K562 (cell line): ENCODE measurements at regions of chr1 and their contacts with region 1.

Region 1: GRCh38 chr1:60978421-60979357 is 103.7 kb upstream of the NFIA start:
- DNase-seq: peak; percentile 63 to 80 (median 74)
- ATAC-seq: peak; percentile 98
- H3K4me3 ChIP-seq: no peak overlapping the region
- H3K27ac ChIP-seq: no peak overlapping the region
- H3K4me1 ChIP-seq: peaks cover 5 to 16% of the 10 kb centered on the region in 2 experiments; a peak in 3 of 5 replicates
- H3K27me3 ChIP-seq: no peaks in the 10 kb centered on the region
- CTCF ChIP-seq: peak; percentile 86 to 95 (median 90)
- EP300 ChIP-seq: 0 out of 2 replicates have a peak, but pooled peaks have one; percentile 11
- POLR2A ChIP-seq: no peak
- RAD21 ChIP-seq: peak; percentile 95 to 98

Region 2: GRCh38 chr1:60916906-60917305 is 61.8 kb before region 1 on chr1:
- CTCF ChIA-PET with region 1: no interaction called
- POLR2A ChIA-PET with region 1: no interaction called
- in situ Hi-C with region 1: no loop called
- intact Hi-C with region 1: no loop called
- DNase-seq: no peak
- ATAC-seq: no peak; the same call in 2 of the 3 replicates
- H3K4me3 ChIP-seq: no peak overlapping the region
- H3K27ac ChIP-seq: no peak overlapping the region
- H3K4me1 ChIP-seq: no peaks in the 10 kb centered on the region; a peak in 1 of 5 replicates
- H3K27me3 ChIP-seq: no peaks in the 10 kb centered on the region
- CTCF ChIP-seq: no peak
- EP300 ChIP-seq: no peak
- POLR2A ChIP-seq: no peak
- RAD21 ChIP-seq: no peak

Region 3: DNA sequence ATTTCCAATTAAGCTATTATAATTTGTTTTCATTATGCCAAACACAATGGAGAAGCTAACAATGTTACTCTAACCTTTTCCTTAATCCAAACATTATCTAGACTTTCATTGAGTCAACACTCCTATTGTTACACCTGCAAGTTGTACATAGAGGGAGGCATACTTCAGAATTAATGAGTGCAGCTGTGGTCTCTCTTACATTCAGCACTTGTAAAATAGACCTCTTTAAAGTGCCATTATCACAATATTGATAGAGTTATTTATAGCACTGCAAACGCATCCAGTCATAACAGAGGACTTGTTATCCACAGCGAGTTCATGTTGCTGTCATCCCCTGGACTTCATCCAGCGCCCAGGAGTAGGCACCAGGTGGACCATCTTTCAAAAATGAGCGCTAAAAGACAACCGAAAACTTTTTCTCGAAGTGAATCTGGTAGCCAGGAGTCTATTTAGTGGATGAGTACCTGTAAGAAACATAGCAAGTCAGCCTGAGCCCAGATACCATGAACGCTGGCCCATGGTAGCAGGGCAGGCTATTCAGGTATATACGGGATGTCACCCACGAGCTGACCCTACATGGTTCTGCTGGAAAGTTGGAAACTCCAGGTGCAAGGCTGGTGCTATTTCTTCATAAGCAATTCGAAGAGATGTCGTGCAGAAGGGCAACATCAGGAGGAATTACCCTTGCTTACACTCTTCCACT is 33.0 kb after region 1 on chr1:
- CTCF ChIA-PET with region 1: no interaction called
- POLR2A ChIA-PET with region 1: interaction called, 4 read pairs
- in situ Hi-C with region 1: no loop called
- intact Hi-C with region 1: loop called (anchors 2 kb)
- DNase-seq: peak in 1 of 4 experiments; percentile 21
- ATAC-seq: no peak
- H3K4me3 ChIP-seq: no peak overlapping the region
- H3K27ac ChIP-seq: peak overlapping the region; percentile 78
- H3K4me1 ChIP-seq: peaks cover 16 to 47% of the 10 kb centered on the region in 2 experiments; a peak in 4 of 5 replicates
- H3K27me3 ChIP-seq: no peaks in the 10 kb centered on the region
- CTCF ChIP-seq: no peak
- EP300 ChIP-seq: no peak
- POLR2A ChIP-seq: no peak
- RAD21 ChIP-seq: no peak

Region 4: DNA sequence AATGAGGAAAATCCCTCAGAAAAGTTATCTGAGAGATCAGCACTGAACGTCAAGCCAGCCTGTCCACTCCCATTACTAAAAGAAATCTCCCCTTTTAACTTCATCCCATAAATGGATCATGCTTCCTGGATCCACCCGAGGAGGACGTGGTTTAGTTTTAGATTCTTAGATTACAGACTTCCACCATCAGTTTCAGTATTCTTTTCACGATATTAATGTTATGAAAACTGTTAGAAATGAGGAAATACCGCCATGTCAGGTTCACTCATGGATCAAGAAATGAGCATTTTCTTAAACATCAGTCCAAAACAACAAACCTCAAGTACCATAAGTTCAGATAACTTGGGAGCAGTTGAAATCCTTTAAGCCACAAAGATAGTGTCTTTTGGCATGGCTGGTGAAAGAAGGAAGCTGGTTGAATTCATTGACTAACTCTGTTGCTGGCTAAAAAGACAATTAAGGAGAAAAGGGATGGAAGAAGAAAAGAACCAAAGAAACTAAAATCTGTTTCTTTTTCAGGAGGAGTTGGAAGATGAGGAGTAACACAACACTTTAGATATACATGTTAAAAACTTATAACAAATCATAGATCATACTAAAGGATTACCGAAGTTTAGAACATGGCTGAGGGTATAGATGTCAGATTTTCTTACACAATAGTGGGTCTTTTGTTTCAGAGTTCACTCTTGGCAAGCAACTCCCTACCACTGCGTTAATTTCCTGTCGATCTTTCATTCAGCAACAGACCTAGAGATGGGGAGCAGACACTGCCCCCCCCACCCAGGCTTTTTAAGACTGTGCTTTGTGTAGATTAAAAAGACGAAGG is 153.7 kb after region 1 on chr1:
- CTCF ChIA-PET with region 1: no interaction called
- POLR2A ChIA-PET with region 1: interaction called, 3 read pairs
- in situ Hi-C with region 1: no loop called
- intact Hi-C with region 1: loop called (anchors 5 kb)
- DNase-seq: no peak
- ATAC-seq: peak; percentile 43
- H3K4me3 ChIP-seq: no peak overlapping the region
- H3K27ac ChIP-seq: peak overlapping the region; percentile 44; the same call in 1 of the 3 replicates
- H3K4me1 ChIP-seq: peaks cover 0 to 18% of the 10 kb centered on the region in 2 experiments; a peak in 3 of 5 replicates
- H3K27me3 ChIP-seq: no peaks in the 10 kb centered on the region
- CTCF ChIP-seq: no peak
- EP300 ChIP-seq: no peak; the same call in 1 of the 2 replicates
- POLR2A ChIP-seq: no peak
- RAD21 ChIP-seq: no peak

Region 5: DNA sequence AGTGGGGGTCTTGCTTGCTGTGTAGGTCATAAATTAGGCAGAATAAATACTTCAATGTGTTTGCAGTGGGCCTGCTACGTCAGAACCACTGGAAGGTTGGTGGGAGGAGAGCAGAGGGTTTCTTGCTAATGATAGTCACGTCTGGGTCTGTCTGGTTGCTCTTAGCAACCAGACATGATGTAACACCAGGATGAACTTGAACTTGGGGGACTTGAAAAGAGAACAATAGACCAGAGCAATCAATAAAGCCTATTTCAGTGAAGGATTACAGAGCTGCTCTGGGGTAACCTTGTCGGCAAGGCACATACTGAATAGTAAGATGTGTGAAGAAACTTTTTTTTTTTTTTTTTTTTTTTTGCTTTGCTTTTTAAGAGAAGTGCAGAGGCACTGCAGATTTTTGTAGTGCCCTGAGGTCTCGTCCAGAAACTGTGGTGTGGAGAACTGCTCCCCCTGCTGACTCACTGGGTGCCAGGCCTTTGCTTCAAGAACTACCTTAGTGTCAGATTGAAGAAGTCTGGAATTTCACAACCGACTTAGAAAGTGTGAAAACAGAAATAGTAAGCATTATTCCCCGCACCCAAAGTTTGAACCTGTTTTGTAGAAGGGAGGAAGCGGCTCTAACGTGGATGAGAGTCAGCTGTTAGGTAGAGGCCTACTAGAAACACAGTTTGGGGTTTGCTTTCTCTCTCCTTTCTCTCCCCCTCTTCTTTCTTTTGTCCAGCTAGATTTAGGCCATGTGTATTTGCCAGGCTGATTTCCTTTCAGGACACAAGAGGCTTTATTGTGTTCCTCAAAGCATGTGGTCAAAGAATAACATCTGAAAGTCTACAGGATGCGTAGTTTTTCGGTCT is 474.6 kb after region 1 on chr1:
- CTCF ChIA-PET with region 1: interaction called, 4 read pairs
- POLR2A ChIA-PET with region 1: no interaction called
- in situ Hi-C with region 1: loop called (anchors 10 kb)
- intact Hi-C with region 1: loop called (anchors 1 kb)
- DNase-seq: peak; percentile 59 to 85 (median 68)
- ATAC-seq: peak; percentile 97
- H3K4me3 ChIP-seq: no peak overlapping the region
- H3K27ac ChIP-seq: no peak overlapping the region
- H3K4me1 ChIP-seq: peaks cover 3 to 7% of the 10 kb centered on the region in 2 experiments; a peak in 3 of 5 replicates
- H3K27me3 ChIP-seq: no peaks in the 10 kb centered on the region
- CTCF ChIP-seq: peak; percentile 74 to 85 (median 83)
- EP300 ChIP-seq: no peak
- POLR2A ChIP-seq: no peak
- RAD21 ChIP-seq: peak; percentile 80 to 82

Region 6: GRCh38 chr1:61641578-61642336 is 663.1 kb after region 1 on chr1:
- CTCF ChIA-PET with region 1: no interaction called
- POLR2A ChIA-PET with region 1: no interaction called
- in situ Hi-C with region 1: no loop called
- intact Hi-C with region 1: loop called (anchors 5 kb)
- DNase-seq: peak; percentile 47 to 82 (median 64)
- ATAC-seq: peak; percentile 99
- H3K4me3 ChIP-seq: no peak overlapping the region
- H3K27ac ChIP-seq: no peak overlapping the region
- H3K4me1 ChIP-seq: peaks cover 0 to 8% of the 10 kb centered on the region in 2 experiments; a peak in 1 of 5 replicates
- H3K27me3 ChIP-seq: peaks cover 4 to 8% of the 10 kb centered on the region in 2 experiments; a peak in 3 of 5 replicates
- CTCF ChIP-seq: peak; percentile 76 to 92 (median 82)
- EP300 ChIP-seq: no peak
- POLR2A ChIP-seq: no peak
- RAD21 ChIP-seq: peak; percentile 49 to 74

Region 7: GRCh38 chr1:61842871-61843514 is 864.3 kb after region 1 on chr1:
- CTCF ChIA-PET with region 1: no interaction called
- POLR2A ChIA-PET with region 1: no interaction called
- in situ Hi-C with region 1: loop called (anchors 10 kb)
- intact Hi-C with region 1: no loop called
- DNase-seq: peak in 1 of 4 experiments; percentile 11
- ATAC-seq: 0 out of 3 replicates have a peak, but pooled peaks have one; percentile 29
- H3K4me3 ChIP-seq: no peak overlapping the region
- H3K27ac ChIP-seq: no peak overlapping the region
- H3K4me1 ChIP-seq: no peaks in the 10 kb centered on the region
- H3K27me3 ChIP-seq: no peaks in the 10 kb centered on the region; a peak in 1 of 5 replicates
- CTCF ChIP-seq: peak in 2 of 3 experiments; percentile 19 to 43; a peak in 2 of 6 replicates
- EP300 ChIP-seq: no peak
- POLR2A ChIP-seq: no peak
- RAD21 ChIP-seq: peak in 1 of 2 experiments; percentile 53; a peak in 2 of 4 replicates